Mammary epithelial cell (primary cell): ENCODE measurements at regions of chr3 and their contacts with region 1.

Region 1: GRCh38 chr3:129120254-129121004 is 1.2 kb downstream of the RAB43 start:
- DNase-seq: peak; percentile 97
- H3K4me3 ChIP-seq: peak overlapping the region; percentile 85 to 87 (median 87)
- H3K27ac ChIP-seq: peak overlapping the region; percentile 98
- H3K4me1 ChIP-seq: peaks cover 29% of the 10 kb centered on the region
- H3K27me3 ChIP-seq: no peaks in the 10 kb centered on the region
- CTCF ChIP-seq: peak; percentile 12 to 43

Region 2: DNA sequence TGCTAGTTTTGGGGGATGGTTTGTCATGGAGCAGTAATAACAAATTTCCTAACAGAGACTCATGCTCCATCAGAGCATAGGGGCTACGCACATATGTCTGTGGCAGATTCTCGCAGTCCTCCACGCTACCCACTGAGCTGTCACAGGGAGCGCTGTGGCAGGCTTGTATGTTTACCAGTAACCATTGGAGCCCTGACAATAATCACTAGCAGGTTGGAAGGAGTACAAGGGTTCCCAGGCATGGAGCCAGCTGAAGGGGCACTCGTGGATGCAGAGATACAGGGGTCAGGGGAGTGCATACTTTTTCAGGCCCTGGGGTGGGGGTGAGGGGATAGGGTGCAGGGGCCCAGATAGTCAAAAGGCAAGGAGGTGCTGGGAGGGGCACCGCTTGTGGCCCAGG is 67.8 kb before region 1 on chr3:
- CTCF ChIA-PET with region 1: interaction called, 10 read pairs
- dilution Hi-C with region 1: no loop called
- in situ Hi-C with region 1: no loop called
- intact Hi-C with region 1: loop called (anchors 1 kb)
- DNase-seq: no peak
- H3K4me3 ChIP-seq: no peak overlapping the region
- H3K27ac ChIP-seq: no peak overlapping the region
- H3K4me1 ChIP-seq: no peaks in the 10 kb centered on the region
- H3K27me3 ChIP-seq: no peaks in the 10 kb centered on the region
- CTCF ChIP-seq: no peak

Region 3: GRCh38 chr3:129058441-129059200 is 61.8 kb before region 1 on chr3:
- CTCF ChIA-PET with region 1: interaction called, 10 read pairs
- dilution Hi-C with region 1: no loop called
- in situ Hi-C with region 1: no loop called
- intact Hi-C with region 1: loop called (anchors 1 kb)
- DNase-seq: peak; percentile 43
- H3K4me3 ChIP-seq: no peak overlapping the region
- H3K27ac ChIP-seq: no peak overlapping the region
- H3K4me1 ChIP-seq: no peaks in the 10 kb centered on the region
- H3K27me3 ChIP-seq: no peaks in the 10 kb centered on the region
- CTCF ChIP-seq: peak in 1 of 2 donors; percentile 9

Region 4: GRCh38 chr3:129084501-129084900 is 35.9 kb before region 1 on chr3:
- CTCF ChIA-PET with region 1: no interaction called
- dilution Hi-C with region 1: loop called (anchors 5 kb)
- in situ Hi-C with region 1: no loop called
- intact Hi-C with region 1: no loop called
- DNase-seq: no peak
- H3K4me3 ChIP-seq: no peak overlapping the region
- H3K27ac ChIP-seq: no peak overlapping the region
- H3K4me1 ChIP-seq: peaks cover 8% of the 10 kb centered on the region
- H3K27me3 ChIP-seq: no peaks in the 10 kb centered on the region
- CTCF ChIP-seq: no peak

Region 5: DNA sequence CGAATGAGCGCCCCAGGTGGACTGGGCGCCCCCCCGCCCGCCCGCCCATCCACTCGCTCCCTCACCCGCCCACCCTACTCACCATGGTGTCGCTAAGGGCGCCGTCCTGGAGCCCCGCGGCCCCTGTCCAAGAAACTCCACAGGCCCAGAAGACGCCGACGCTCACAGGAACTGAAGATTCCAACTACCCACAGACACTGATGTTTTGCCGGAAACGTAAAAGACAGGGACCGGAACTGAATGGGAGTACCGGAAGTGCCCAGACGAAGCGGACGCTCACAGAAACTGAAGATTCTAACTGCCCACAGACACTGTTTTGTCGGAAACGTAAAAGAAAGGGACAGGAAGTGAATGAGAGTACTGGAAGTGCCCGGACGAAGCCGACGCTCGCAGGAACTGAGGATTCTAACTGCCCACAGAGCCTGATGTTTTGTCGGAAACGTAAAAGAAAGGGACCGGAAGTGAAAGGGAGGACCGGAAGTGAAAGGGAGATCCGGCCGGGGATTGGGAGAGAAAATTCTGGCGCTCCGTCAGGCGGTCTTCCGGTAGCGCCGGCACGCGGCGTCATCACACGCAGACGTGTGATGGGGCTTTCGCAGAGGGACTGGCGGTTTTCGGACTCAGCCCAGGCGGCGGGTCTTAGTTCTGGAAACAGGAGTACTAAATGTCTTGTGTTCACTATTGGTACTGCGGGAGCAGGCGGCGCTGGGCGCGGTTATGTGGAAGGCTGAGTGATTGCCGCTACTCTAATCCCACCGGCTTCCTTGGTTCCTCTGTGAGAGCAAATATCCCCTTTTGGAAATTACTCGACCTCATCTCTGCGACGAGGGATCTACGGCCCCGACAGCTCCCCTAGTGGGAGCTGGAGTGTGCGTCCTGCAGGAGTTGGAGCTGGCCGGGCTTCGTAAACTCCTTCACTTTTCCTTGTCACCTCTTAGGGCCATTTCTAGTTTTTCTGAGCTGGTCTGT is 40.7 kb after region 1 on chr3 and contains the start of gene ISY1:
- CTCF ChIA-PET with region 1: interaction called, 5 read pairs
- dilution Hi-C with region 1: loop called (anchors 5 kb)
- in situ Hi-C with region 1: no loop called
- intact Hi-C with region 1: no loop called
- DNase-seq: peak; percentile 96
- H3K4me3 ChIP-seq: peak within 1 kb of the TSS; percentile 65 to 99 (median 96)
- H3K27ac ChIP-seq: peak within 1 kb of the TSS; percentile 90
- H3K4me1 ChIP-seq: peaks cover 19% of the 10 kb centered on the region
- H3K27me3 ChIP-seq: no peaks in the 10 kb centered on the region
- CTCF ChIP-seq: peak; percentile 85 to 96
- total RNA-seq, gene ISY1: 16.8 to 38.2 TPM

Region 6: DNA sequence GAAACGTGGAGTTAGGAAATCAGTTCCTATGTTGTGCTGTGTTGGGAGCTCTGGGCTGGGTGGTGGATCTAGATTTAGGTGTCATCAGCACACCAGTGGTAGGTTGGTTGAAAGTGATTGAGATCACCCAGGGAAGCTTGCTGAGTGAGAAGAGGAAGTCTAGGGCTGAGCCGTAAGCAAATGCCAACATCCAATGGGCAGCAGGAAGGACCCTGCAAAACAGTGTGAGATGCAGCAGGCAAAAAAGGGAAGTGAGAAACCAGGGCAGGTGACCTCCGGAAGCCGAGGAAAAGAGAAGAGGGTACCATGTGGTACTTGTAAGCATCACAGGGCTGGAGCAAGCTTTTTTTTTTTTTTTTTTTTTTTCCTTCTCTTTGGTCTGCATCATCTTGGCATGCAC is 113.1 kb after region 1 on chr3:
- CTCF ChIA-PET with region 1: no interaction called
- dilution Hi-C with region 1: loop called (anchors 5 kb)
- in situ Hi-C with region 1: no loop called
- intact Hi-C with region 1: no loop called
- DNase-seq: no peak
- H3K4me3 ChIP-seq: no peak overlapping the region
- H3K27ac ChIP-seq: no peak overlapping the region
- H3K4me1 ChIP-seq: peaks cover 25% of the 10 kb centered on the region
- H3K27me3 ChIP-seq: no peaks in the 10 kb centered on the region
- CTCF ChIP-seq: no peak

Region 7: GRCh38 chr3:129278439-129278970 is 158.1 kb after region 1 on chr3 and contains the start of gene HMCES:
- CTCF ChIA-PET with region 1: no interaction called
- dilution Hi-C with region 1: loop called (anchors 5 kb)
- in situ Hi-C with region 1: no loop called
- intact Hi-C with region 1: no loop called
- DNase-seq: peak; percentile 89
- H3K4me3 ChIP-seq: peak within 1 kb of the TSS; percentile 72 to 92 (median 83)
- H3K27ac ChIP-seq: peak within 1 kb of the TSS; percentile 87
- H3K4me1 ChIP-seq: peaks cover 26% of the 10 kb centered on the region
- H3K27me3 ChIP-seq: no peaks in the 10 kb centered on the region
- CTCF ChIP-seq: no peak
- total RNA-seq, gene HMCES: 36.2 to 77.8 TPM